WTC11 (cell line): ENCODE measurements at regions of chr13 and their contacts with region 1.

Region 1: GRCh38 chr13:31050486-31051400 is 111.0 kb downstream of the HSPH1 start:
- DNase-seq: no peak
- ATAC-seq: peak; percentile 27; the same call in 1 of the 2 replicates
- H3K4me3 Mint-ChIP-seq: no peak overlapping the region
- H3K27ac Mint-ChIP-seq: no peak overlapping the region
- H3K4me1 Mint-ChIP-seq: peaks cover 6% of the 10 kb centered on the region
- H3K27me3 Mint-ChIP-seq: no peaks in the 10 kb centered on the region
- CTCF ChIP-seq: no peak

Region 2: GRCh38 chr13:30865123-30866049 is 185.4 kb before region 1 on chr13:
- CTCF ChIA-PET with region 1: interaction called, 18 read pairs
- POLR2A ChIA-PET with region 1: no interaction called
- DNase-seq: peak; percentile 72
- ATAC-seq: peak; percentile 59
- H3K4me3 Mint-ChIP-seq: peak overlapping the region; percentile 69
- H3K27ac Mint-ChIP-seq: peak overlapping the region; percentile 78
- H3K4me1 Mint-ChIP-seq: peaks cover 54% of the 10 kb centered on the region
- H3K27me3 Mint-ChIP-seq: peaks cover 25% of the 10 kb centered on the region
- CTCF ChIP-seq: peak; percentile 81

Region 3: DNA sequence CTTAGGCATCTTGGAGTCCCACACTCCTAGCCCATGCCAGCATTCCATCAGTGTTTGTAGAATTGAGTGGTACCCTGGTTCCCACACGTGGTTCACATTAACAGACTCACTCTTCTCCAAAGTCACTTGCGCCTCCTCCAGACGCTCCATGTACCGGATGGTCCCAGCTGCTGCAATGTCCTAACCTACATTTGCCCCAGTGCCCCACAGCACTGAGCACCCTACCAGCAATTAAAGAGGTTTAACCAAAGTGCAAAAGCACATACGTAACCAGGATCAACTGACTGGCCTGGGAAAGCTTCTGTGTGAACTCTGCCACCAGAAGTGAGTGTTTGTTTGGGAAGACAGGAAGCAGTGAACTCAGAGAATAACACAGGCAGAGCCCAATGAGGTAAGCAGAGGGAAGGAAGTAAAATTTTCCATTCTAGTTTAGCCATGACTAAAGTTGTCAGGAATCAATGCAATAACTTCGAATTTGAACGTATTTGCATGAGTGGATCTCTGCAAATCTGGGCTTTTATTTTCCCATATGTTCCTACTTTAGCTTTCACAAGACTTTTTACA is 152.0 kb before region 1 on chr13:
- CTCF ChIA-PET with region 1: no interaction called
- POLR2A ChIA-PET with region 1: no interaction called
- DNase-seq: no peak
- ATAC-seq: no peak
- H3K4me3 Mint-ChIP-seq: no peak overlapping the region
- H3K27ac Mint-ChIP-seq: no peak overlapping the region
- H3K4me1 Mint-ChIP-seq: peaks cover 12% of the 10 kb centered on the region
- H3K27me3 Mint-ChIP-seq: peaks cover 8% of the 10 kb centered on the region
- CTCF ChIP-seq: no peak

Region 4: GRCh38 chr13:31105020-31105795 is 54.5 kb after region 1 on chr13:
- CTCF ChIA-PET with region 1: interaction called, 13 read pairs
- POLR2A ChIA-PET with region 1: no interaction called
- DNase-seq: no peak
- ATAC-seq: peak; percentile 44; the same call in 1 of the 2 replicates
- H3K4me3 Mint-ChIP-seq: no peak overlapping the region
- H3K27ac Mint-ChIP-seq: no peak overlapping the region
- H3K4me1 Mint-ChIP-seq: peaks cover 5% of the 10 kb centered on the region
- H3K27me3 Mint-ChIP-seq: no peaks in the 10 kb centered on the region; the same call in 1 of the 2 replicates
- CTCF ChIP-seq: no peak